Left colon (tissue), 2 donors: ENCODE measurements at regions of chr13 and their contacts with region 1.

Region 1: GRCh38 chr13:21111546-21111945 is 50.2 kb upstream of the LATS2 start:
- DNase-seq: no peak
- ATAC-seq: no peak

Region 2: GRCh38 chr13:20945952-20946383 is 165.6 kb before region 1 on chr13:
- intact Hi-C with region 1: no loop called
- DNase-seq: peak; percentile 22 to 28
- ATAC-seq: no peak

Region 3: GRCh38 chr13:21481359-21481758 is 369.8 kb after region 1 on chr13:
- intact Hi-C with region 1: loop called in 1 of 2 experiments (anchors 5 kb)
- DNase-seq: no peak
- ATAC-seq: no peak